PC-9 (cell line): ENCODE measurements at regions of chr14 and their contacts with region 1.

Region 1: GRCh38 chr14:39315859-39316444 is 82.2 kb downstream of the MIA2 start:
- DNase-seq: no peak
- H3K4me3 ChIP-seq: no peak overlapping the region
- H3K27ac ChIP-seq: no peak overlapping the region
- H3K4me1 ChIP-seq: no peaks in the 10 kb centered on the region
- H3K27me3 ChIP-seq: no peaks in the 10 kb centered on the region
- CTCF ChIP-seq: no peak

Region 2: DNA sequence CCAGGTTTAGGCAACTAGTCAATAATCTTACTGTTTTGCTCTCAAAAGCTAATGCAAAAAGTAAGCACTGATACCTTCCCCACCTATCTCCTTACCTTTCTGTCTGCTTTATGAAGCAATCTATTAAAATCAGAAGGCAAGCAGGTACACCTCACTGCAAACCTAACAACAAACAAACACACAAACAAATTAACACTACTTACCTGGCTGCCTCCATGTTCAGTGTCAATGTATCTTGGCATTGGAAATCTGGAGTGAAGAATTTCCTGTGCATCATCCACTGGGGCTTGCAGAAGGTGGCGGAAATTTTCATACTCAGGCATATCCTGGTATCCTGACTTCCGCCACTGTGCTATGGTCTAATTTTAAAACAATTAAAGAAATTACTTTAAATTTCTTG is 275.4 kb before region 1 on chr14:
- CTCF ChIA-PET with region 1: interaction called, 10 read pairs
- POLR2A ChIA-PET with region 1: no interaction called
- intact Hi-C with region 1: no loop called
- DNase-seq: no peak
- H3K4me3 ChIP-seq: no peak overlapping the region
- H3K27ac ChIP-seq: no peak overlapping the region
- H3K4me1 ChIP-seq: no peaks in the 10 kb centered on the region
- H3K27me3 ChIP-seq: no peaks in the 10 kb centered on the region
- CTCF ChIP-seq: no peak